Activated CD4-positive, alpha-beta T cell treated with anti-CD3 and anti-CD28 coated beads for 36 hours (primary cell): ENCODE measurements at regions of chr17 and their contacts with region 1.

Region 1: GRCh38 chr17:82098072-82098821 is at the start of gene FASN:
- DNase-seq: peak; percentile 97
- ATAC-seq: peak; percentile 86
- H3K4me3 Mint-ChIP-seq: peak within 1 kb of the TSS; percentile 78
- H3K27ac Mint-ChIP-seq: peak within 1 kb of the TSS; percentile 19
- H3K4me1 Mint-ChIP-seq: peaks cover 14% of the 10 kb centered on the region
- H3K27me3 Mint-ChIP-seq: no peaks in the 10 kb centered on the region
- total RNA-seq, gene FASN: 239 to 259 TPM

Region 2: GRCh38 chr17:81294856-81295680 is 803.2 kb before region 1 on chr17 and contains the start of gene SLC38A10:
- CTCF ChIA-PET with region 1: no interaction called
- POLR2A ChIA-PET with region 1: no interaction called
- intact Hi-C with region 1: loop called in 1 of 2 experiments (anchors 1 kb)
- DNase-seq: peak; percentile 95
- ATAC-seq: peak; percentile 91
- H3K4me3 Mint-ChIP-seq: peak within 1 kb of the TSS; percentile 89
- H3K27ac Mint-ChIP-seq: peak within 1 kb of the TSS; percentile 96
- H3K4me1 Mint-ChIP-seq: peaks cover 36% of the 10 kb centered on the region
- H3K27me3 Mint-ChIP-seq: no peaks in the 10 kb centered on the region
- total RNA-seq, gene SLC38A10: 47.6 to 52.9 TPM

Region 3: DNA sequence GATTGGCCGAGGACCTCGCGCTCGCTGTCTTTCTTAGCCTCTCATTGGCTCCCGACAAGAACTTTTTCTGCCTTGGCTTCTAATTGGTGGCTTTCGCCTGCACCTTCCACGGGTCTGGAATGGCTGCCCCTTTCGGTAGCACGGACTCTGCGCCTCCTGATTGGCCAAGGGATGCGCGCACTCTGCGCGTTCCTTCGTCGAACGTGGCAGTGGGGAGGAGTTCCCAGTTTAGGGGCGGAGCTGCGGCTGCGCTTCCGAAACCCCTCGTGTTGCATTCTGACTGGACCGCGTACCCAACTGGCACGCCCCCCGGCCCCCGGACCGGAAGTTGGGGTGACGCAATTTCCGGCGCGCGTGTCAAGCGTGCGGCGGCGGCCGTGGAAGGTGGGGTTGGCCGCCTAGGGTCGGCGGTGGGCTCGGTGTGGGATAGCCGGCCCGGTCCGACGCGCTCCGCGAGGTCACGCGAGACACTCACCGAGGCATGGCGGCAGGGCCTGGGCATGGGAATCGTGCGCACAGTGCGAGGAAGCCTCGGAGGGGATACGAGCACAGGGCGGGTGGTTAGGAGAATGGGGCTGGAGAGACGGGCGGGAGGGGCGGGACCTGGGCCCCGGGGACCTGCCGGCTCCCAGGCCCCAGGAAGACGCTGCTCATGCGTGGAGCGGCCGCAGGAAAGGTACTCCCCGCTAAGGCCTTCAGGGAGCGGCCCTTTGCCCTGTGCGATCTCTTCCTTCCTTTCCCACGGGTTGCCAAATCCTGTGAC is 237.3 kb before region 1 on chr17:
- CTCF ChIA-PET with region 1: no interaction called
- POLR2A ChIA-PET with region 1: no interaction called
- intact Hi-C with region 1: loop called in 1 of 2 experiments (anchors 1 kb)
- DNase-seq: peak; percentile 99
- ATAC-seq: peak; percentile 91
- H3K4me3 Mint-ChIP-seq: peak overlapping the region; percentile 99
- H3K27ac Mint-ChIP-seq: peak overlapping the region; percentile 98
- H3K4me1 Mint-ChIP-seq: peaks cover 50% of the 10 kb centered on the region
- H3K27me3 Mint-ChIP-seq: no peaks in the 10 kb centered on the region

Region 4: DNA sequence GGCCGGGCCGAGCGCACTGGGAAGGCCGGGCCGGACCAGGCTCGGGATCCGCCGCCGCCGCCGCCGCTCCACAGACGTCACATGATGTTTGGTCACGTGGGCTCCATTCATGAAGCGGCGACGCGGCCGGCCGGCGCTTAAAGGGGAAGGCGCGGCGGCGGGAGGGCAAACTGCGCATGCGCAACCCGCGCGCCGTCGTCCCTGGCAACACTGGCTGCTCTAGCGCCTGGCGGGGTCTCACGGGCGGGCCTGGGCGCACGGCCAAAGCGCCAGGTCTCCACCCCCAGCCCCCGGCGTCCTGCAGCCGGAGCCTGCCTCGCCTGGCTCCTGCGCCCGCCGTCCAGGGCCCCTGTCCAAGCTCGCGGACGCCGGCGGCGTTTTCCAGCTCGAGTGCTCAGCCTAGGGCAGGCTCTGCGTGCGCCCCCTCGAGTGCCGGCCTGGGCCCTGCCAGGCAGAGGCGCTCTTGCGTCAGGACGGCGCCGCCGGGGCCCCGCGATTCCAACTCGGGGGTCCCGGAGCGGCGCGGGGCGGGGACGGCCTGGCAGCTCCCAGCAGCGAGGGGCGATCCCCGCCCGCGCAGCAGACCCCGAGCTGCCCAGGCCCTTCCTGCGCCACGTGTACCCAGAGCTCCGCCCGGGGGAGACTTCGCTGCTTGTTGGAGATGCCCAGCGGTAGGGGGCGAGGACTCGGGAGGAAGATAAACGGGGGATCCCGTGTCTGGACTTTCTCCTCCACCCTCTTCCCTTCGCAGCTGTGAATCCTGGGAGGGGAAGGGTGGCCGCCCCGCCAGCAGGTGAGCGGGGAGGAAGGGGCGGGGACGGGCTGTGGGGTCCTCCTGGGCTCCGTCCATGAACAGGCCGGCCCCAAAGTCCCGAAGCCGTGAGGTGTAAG is 170.3 kb before region 1 on chr17 and contains the start of gene MAFG:
- CTCF ChIA-PET with region 1: no interaction called
- POLR2A ChIA-PET with region 1: no interaction called
- intact Hi-C with region 1: loop called in 1 of 2 experiments (anchors 1 kb)
- DNase-seq: peak; percentile 94
- ATAC-seq: peak; percentile 62
- H3K4me3 Mint-ChIP-seq: peak within 1 kb of the TSS; percentile 85
- H3K27ac Mint-ChIP-seq: peak within 1 kb of the TSS; percentile 85
- H3K4me1 Mint-ChIP-seq: peaks cover 32% of the 10 kb centered on the region
- H3K27me3 Mint-ChIP-seq: peaks cover 2% of the 10 kb centered on the region
- total RNA-seq, gene MAFG: 15.3 to 18.3 TPM

Region 5: GRCh38 chr17:82030470-82031302 is 67.6 kb before region 1 on chr17:
- CTCF ChIA-PET with region 1: interaction called, 4 read pairs
- POLR2A ChIA-PET with region 1: interaction called, 3 read pairs
- intact Hi-C with region 1: loop called (anchors 1 to 2 kb)
- DNase-seq: peak; percentile 92
- ATAC-seq: peak; percentile 79
- H3K4me3 Mint-ChIP-seq: peak overlapping the region; percentile 67
- H3K27ac Mint-ChIP-seq: no peak overlapping the region
- H3K4me1 Mint-ChIP-seq: peaks cover 13% of the 10 kb centered on the region
- H3K27me3 Mint-ChIP-seq: no peaks in the 10 kb centered on the region

Region 6: DNA sequence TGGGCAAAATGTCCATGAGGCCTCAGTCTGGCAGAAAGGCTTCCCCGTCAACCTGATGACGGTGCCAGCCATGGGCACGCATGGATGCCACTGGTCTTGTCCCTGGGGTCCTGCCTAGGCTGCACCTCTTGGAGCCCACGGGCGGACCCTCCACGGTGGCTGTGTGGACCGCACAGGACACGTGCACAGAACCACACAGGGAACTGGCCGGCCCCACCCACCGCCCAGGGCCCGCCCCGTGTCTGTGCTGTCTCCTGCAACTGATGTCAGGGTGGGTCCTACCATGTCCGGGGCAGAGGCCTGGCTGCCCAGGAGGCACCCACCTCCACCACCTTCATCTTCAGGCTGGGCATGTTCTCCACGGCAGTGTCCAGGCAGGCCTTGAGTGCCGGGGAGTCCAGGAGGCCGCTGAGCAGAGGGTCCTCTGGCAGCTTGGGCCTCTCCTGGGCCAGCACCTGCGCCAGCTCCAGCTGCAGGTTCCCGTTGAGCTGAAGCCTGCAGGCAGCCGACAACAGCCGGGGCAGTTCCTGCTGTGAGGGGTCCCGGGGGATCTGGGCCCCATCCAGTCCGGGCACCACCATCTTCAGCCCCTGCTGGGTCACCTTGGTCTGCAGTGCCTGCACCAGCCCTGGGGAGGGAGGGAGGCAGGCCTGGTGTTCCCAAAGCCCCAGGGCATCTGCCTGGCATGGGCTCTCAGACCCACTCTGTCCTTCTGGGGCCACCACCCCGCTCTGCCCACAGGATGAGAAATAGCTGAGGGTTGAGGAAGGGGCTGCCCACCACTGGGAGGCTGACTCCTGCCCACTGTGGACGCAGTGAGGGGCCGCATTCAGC is 12.1 kb before region 1 on chr17:
- CTCF ChIA-PET with region 1: no interaction called
- POLR2A ChIA-PET with region 1: no interaction called
- intact Hi-C with region 1: no loop called
- DNase-seq: no peak
- ATAC-seq: no peak
- H3K4me3 Mint-ChIP-seq: no peak overlapping the region
- H3K27ac Mint-ChIP-seq: no peak overlapping the region
- H3K4me1 Mint-ChIP-seq: no peaks in the 10 kb centered on the region
- H3K27me3 Mint-ChIP-seq: no peaks in the 10 kb centered on the region

Region 7: GRCh38 chr17:82138511-82138992 is 40.3 kb after region 1 on chr17:
- CTCF ChIA-PET with region 1: no interaction called
- POLR2A ChIA-PET with region 1: no interaction called
- intact Hi-C with region 1: no loop called
- DNase-seq: no peak
- ATAC-seq: no peak
- H3K4me3 Mint-ChIP-seq: no peak overlapping the region
- H3K27ac Mint-ChIP-seq: no peak overlapping the region
- H3K4me1 Mint-ChIP-seq: no peaks in the 10 kb centered on the region
- H3K27me3 Mint-ChIP-seq: no peaks in the 10 kb centered on the region

Region 8: GRCh38 chr17:82153745-82154375 is 55.6 kb after region 1 on chr17:
- CTCF ChIA-PET with region 1: no interaction called
- POLR2A ChIA-PET with region 1: no interaction called
- intact Hi-C with region 1: loop called in 1 of 2 experiments (anchors 1 kb)
- DNase-seq: peak; percentile 91
- ATAC-seq: peak; percentile 98
- H3K4me3 Mint-ChIP-seq: no peak overlapping the region
- H3K27ac Mint-ChIP-seq: no peak overlapping the region
- H3K4me1 Mint-ChIP-seq: peaks cover 7% of the 10 kb centered on the region
- H3K27me3 Mint-ChIP-seq: no peaks in the 10 kb centered on the region

Region 9: DNA sequence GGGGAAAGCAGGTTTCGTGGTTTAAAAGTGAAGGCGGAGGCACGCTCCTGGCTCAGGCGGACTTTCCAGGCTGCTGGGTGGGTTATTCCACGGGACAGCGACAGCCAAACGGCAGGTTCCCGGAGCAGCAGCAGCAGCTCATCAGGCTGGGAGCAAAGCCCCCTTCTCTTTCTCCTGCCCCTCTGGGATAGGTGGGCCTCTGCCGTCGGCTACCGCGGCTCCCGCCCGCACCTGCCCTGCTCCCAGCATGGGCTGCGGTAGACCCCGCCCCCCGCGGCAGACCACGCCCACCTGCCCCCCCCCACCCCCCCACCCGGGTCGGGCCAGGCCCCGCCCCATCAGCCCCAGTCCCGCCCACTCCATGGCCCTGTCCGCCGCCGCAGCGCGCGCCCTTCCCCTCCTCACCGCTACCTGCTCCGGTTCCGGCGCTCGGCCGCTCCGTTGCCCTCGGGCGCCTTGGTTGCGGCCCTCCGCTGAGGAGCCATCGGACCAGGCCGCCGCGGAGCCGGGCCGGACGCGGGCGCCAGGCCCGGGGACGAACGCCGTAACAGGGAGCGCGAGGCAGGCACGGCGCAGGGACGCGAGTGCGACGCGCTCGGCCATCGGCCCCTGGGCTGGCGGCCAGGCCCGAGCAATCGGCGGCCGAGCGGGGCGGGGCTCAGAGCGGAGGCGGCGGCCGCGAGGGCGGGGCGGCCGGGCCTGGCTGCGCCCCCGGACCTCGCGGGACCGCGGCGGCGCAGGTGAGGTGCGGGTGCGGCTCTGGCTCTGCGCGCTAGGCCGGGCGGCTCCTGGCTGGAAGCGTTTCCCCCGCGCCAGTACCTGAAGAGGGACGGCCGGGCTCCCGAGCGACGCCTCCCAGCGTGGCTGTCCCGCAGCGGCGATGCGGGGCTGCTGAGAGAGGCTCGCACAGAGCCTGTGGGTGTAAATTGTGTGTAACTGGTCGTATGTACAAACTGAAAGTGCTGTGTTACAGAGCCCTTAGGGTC is 320.0 kb after region 1 on chr17 and contains the starts of genes HEXD and OGFOD3:
- CTCF ChIA-PET with region 1: no interaction called
- POLR2A ChIA-PET with region 1: no interaction called
- intact Hi-C with region 1: loop called in 1 of 2 experiments (anchors 1 kb)
- DNase-seq: peak; percentile 91
- ATAC-seq: peak; percentile 88
- H3K4me3 Mint-ChIP-seq: peak within 1 kb of the TSS; percentile 73
- H3K27ac Mint-ChIP-seq: peak within 1 kb of the TSS; percentile 42
- H3K4me1 Mint-ChIP-seq: peaks cover 21% of the 10 kb centered on the region
- H3K27me3 Mint-ChIP-seq: no peaks in the 10 kb centered on the region
- total RNA-seq, gene HEXD: 23.3 to 26.0 TPM
- total RNA-seq, gene OGFOD3: 20.0 to 22.3 TPM